AG04450 (cell line): ENCODE measurements at regions of chr22 and their contacts with region 1.

Region 1: DNA sequence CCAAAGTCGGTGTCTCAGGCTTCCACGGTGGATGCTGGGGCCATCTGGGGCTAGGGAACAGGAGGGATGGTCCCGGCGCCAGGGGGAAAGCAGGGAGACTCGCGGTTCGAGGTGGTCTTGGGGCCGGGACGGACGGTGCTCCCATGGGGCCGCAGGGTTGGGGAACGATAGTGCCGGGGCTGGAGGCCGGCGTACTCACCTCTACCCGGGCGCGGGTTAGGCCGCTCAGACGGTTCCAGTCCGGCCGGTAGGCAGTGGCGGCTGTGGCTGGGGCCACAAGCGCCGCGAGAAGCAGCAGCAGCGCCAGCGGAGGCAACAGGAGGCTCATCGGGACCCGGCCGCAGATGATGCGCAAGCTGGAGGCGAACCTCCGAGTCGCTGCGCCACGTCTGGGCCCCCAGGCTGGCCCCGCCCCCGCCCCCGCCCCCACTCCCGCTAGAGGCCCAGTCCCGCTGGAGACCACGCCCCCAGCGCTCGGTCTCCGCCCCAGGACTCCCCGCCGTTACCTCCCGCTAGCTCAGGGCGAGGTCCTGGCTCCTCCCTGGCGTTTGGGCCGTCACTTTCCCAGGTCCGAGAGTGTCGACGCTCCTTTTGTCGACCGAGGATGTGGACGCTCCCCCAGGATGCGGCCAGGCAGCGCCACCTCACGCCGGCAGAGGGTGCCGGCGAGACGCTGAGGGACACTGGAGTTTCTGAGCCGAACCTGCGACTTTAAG is at the start of gene SELENOM:
- DNase-seq: peak; percentile 97
- H3K4me3 ChIP-seq: peak within 1 kb of the TSS; percentile 95
- H3K27ac ChIP-seq: peak within 1 kb of the TSS; percentile 98
- H3K27me3 ChIP-seq: no peaks in the 10 kb centered on the region
- CTCF ChIP-seq: peak; percentile 97
- polyA plus RNA-seq, gene SELENOM: 89.0 and 153 TPM in 2 replicates

Region 2: DNA sequence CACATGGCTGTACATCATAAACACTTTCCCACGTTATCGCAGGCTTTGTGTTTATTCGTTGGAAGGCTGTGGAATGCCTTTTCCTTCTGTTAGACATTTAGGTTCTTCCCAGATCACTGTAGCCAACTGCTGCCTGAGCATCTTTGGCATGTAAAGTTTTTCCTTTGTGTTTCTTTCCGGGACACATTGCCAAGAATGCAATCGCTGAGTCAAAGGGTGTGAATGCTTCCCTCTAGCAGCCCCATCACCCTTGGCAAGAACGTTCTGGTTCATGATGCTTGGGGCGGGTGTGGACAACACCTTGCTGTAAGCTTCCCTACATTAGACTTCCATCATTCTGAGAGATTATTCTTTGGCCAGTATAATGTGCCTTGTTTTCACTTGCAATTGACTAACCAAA is 276.4 kb before region 1 on chr22:
- CTCF ChIA-PET with region 1: no interaction called
- POLR2A ChIA-PET with region 1: no interaction called
- DNase-seq: peak; percentile 80
- H3K4me3 ChIP-seq: no peak overlapping the region
- H3K27ac ChIP-seq: peak overlapping the region; percentile 91
- H3K27me3 ChIP-seq: no peaks in the 10 kb centered on the region
- CTCF ChIP-seq: no peak

Region 3: GRCh38 chr22:30968924-30969539 is 138.3 kb before region 1 on chr22 and contains the start of gene TUG1:
- CTCF ChIA-PET with region 1: interaction called, 5 read pairs
- POLR2A ChIA-PET with region 1: interaction called, 10 read pairs
- DNase-seq: peak; percentile 95
- H3K4me3 ChIP-seq: peak within 1 kb of the TSS; percentile 73
- H3K27ac ChIP-seq: peak within 1 kb of the TSS; percentile 93
- H3K27me3 ChIP-seq: no peaks in the 10 kb centered on the region
- CTCF ChIP-seq: no peak
- polyA plus RNA-seq, gene TUG1: 129 and 152 TPM in 2 replicates

Region 4: GRCh38 chr22:31093086-31093850 is 14.1 kb before region 1 on chr22:
- CTCF ChIA-PET with region 1: interaction called, 10 read pairs
- POLR2A ChIA-PET with region 1: interaction called, 18 read pairs
- DNase-seq: no peak
- H3K4me3 ChIP-seq: no peak overlapping the region
- H3K27ac ChIP-seq: no peak overlapping the region
- H3K27me3 ChIP-seq: no peaks in the 10 kb centered on the region
- CTCF ChIP-seq: no peak

Region 5: GRCh38 chr22:31124811-31125465 is 17.6 kb after region 1 on chr22:
- CTCF ChIA-PET with region 1: interaction called, 13 read pairs
- POLR2A ChIA-PET with region 1: no interaction called
- DNase-seq: no peak
- H3K4me3 ChIP-seq: no peak overlapping the region
- H3K27ac ChIP-seq: no peak overlapping the region
- H3K27me3 ChIP-seq: peaks cover 2% of the 10 kb centered on the region
- CTCF ChIP-seq: no peak

Region 6: DNA sequence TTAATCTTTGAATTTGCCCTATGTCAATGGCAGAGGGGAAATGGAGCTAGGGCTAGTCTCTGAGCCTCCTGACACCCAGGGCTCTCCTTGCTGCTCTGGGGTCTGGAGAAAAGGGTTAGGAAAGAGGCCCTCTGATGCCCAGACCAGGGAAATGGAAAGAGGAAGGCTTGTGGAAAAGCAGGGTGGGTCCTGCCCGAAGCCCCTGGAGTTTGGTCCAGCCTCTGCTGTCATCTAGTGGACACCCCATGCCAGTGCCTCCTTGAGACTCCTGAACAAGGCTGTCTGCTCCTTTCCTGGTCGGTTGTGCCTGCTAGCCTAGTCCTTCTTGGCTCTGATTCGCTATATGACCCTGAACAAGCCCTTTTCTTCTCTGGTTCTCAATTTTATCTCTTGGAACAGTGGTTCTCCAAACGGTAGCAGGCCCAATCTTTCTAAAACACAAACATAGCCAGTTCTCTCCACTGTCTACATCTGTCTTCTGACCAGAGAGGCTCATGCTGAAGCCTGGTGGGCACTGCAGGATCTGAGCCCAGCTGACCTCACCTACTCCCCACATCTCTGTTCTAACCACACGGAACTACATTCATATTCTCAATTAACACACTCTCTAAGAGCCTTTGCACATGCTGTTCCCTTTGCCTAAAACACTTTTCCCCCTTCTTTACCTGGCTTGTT is 41.8 kb after region 1 on chr22:
- CTCF ChIA-PET with region 1: interaction called, 38 read pairs
- POLR2A ChIA-PET with region 1: no interaction called
- DNase-seq: peak; percentile 54
- H3K4me3 ChIP-seq: no peak overlapping the region
- H3K27ac ChIP-seq: no peak overlapping the region
- H3K27me3 ChIP-seq: no peaks in the 10 kb centered on the region
- CTCF ChIP-seq: peak; percentile 100

Region 7: DNA sequence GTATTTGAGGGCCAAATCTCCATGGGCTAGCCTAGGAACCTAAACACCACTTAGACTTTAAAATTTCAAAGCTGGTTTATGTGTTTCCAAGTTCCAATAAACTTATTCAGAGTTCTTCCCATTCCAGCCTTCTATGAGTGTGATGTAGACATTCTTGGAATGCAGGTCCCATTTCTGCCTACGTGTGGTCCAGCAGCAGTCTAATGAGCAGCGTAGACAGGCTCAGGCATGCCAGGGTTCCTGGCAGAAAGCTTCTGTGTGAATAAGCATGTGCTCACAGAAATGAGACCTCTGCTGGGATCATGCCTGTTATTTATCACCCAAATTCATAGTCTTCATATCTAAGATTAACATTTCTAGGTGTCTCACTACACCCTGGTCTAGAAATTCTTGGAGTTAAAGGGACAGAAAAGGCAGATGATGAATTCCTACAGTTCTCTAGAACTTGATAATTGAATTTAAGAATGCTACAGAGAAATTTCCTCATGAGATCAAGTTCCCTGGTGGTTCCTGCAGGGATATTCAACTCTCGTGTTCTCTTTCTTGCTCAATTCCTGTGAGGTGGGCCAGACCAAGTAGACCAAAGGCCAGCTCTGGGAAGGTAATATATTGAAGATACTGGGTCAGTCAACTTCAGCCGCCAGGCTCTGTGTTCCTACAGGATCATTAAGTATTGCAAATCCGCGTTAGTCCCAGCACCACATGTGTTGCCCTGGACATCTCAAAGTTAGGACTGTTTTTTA is 70.3 kb after region 1 on chr22:
- CTCF ChIA-PET with region 1: interaction called, 13 read pairs
- POLR2A ChIA-PET with region 1: no interaction called
- DNase-seq: peak; percentile 83
- H3K4me3 ChIP-seq: no peak overlapping the region
- H3K27ac ChIP-seq: peak overlapping the region; percentile 90
- H3K27me3 ChIP-seq: no peaks in the 10 kb centered on the region
- CTCF ChIP-seq: peak; percentile 12; the same call in 1 of the 2 replicates

Region 8: DNA sequence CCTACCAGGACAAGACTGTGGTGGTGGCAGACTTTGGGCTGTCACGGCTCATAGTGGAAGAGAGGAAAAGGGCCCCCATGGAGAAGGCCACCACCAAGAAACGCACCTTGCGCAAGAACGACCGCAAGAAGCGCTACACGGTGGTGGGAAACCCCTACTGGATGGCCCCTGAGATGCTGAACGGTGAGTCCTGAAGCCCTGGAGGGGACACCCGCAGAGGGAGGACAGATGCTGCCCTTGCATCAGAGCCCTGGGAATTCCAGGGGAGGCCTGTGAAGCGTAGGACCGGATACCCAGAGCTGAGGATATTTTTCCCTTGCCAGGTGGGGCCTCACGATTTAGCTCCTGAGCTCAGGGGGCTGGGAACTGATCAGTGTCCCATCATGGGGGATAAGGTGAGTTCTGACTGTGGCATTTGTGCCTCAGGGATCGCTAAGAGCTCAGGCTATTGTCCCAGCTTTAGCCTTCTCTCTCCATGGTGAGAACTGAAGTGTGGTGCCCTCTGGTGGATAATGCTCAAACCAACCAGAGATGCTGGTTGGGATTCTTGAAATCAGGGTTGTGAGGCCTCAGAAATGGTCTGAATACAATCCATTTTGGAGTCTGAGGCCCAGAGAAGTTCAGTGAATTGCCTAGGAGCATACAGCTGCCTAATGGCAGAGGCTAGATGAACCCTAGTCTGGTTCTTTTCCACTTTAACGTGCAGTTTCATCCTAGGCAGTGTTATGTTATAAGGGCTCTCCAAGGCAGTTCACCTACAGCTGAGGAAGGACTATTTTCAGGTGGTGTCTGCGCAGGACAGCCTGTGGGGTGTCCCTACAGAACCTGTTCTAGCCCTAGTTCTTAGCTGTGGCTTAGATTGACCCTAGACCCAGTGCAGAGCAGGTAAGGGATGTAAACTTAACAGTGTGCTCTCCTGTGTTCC is 165.4 kb after region 1 on chr22:
- CTCF ChIA-PET with region 1: interaction called, 37 read pairs
- POLR2A ChIA-PET with region 1: no interaction called
- DNase-seq: peak; percentile 32
- H3K4me3 ChIP-seq: no peak overlapping the region
- H3K27ac ChIP-seq: no peak overlapping the region
- H3K27me3 ChIP-seq: no peaks in the 10 kb centered on the region
- CTCF ChIP-seq: peak; percentile 87